Endothelial cell of umbilical vein (primary cell): ENCODE measurements at regions of chr14 and their contacts with region 1.

Region 1: DNA sequence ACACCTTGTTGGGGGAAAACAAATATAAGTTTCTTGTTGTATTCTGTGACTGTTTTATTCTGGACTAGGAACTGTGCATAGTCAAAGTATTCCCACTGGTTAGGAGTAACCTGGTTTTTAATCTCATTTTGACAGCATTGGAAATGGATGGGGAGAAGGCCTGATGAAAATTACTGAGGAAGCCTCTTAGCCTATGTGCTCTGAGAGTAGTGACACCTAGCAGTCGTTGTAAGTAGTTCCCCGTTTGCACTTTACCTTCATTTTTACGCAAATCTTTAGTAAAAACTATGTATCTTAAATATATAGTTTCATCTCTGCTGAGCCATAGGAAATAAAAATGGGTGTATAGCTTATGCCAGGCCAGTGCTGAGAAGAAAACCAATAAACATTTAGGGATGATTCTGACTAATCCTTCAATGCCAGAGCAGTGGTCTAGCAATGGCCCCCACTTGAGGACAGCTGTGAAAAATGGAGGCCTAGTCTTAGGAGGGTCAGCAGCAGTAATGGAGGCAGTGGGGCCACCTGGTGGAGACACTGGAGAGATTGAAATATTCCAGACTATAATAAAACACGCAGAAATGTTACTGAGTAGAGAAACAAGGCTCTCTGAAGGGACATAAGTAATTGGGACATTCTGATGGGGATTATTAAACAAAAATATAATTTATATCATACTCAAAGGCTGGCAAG is 133.2 kb upstream of the NOVA1 start:
- DNase-seq: peak; percentile 39
- H3K4me3 ChIP-seq: no peak overlapping the region
- H3K27ac ChIP-seq: no peak overlapping the region
- H3K4me1 ChIP-seq: no peaks in the 10 kb centered on the region
- H3K27me3 ChIP-seq: no peaks in the 10 kb centered on the region
- CTCF ChIP-seq: peak; percentile 58 to 62
- POLR2A ChIP-seq: no peak

Region 2: GRCh38 chr14:25833341-25834126 is 897.5 kb before region 1 on chr14:
- CTCF ChIA-PET with region 1: interaction called, 5 read pairs
- POLR2A ChIA-PET with region 1: no interaction called
- dilution Hi-C with region 1: no loop called
- intact Hi-C with region 1: loop called (anchors 5 kb)
- DNase-seq: peak; percentile 46
- H3K4me3 ChIP-seq: no peak overlapping the region
- H3K27ac ChIP-seq: no peak overlapping the region
- H3K4me1 ChIP-seq: no peaks in the 10 kb centered on the region
- H3K27me3 ChIP-seq: no peaks in the 10 kb centered on the region
- CTCF ChIP-seq: peak; percentile 52 to 55
- POLR2A ChIP-seq: no peak

Region 3: GRCh38 chr14:26255213-26255612 is 475.9 kb before region 1 on chr14:
- CTCF ChIA-PET with region 1: interaction called, 9 read pairs
- POLR2A ChIA-PET with region 1: no interaction called
- dilution Hi-C with region 1: no loop called
- intact Hi-C with region 1: loop called (anchors 2 kb)
- DNase-seq: peak; percentile 8
- H3K4me3 ChIP-seq: no peak overlapping the region
- H3K27ac ChIP-seq: no peak overlapping the region
- H3K4me1 ChIP-seq: no peaks in the 10 kb centered on the region
- H3K27me3 ChIP-seq: no peaks in the 10 kb centered on the region
- CTCF ChIP-seq: peak in 1 of 2 donors; percentile 3
- POLR2A ChIP-seq: no peak

Region 4: GRCh38 chr14:26598081-26598795 is 132.8 kb before region 1 on chr14:
- CTCF ChIA-PET with region 1: interaction called, 3 read pairs
- POLR2A ChIA-PET with region 1: no interaction called
- dilution Hi-C with region 1: no loop called
- intact Hi-C with region 1: loop called (anchors 1 kb)
- DNase-seq: peak; percentile 92
- H3K4me3 ChIP-seq: peak overlapping the region; percentile 55 to 98 (median 98)
- H3K27ac ChIP-seq: no peak overlapping the region
- H3K4me1 ChIP-seq: peaks cover 5% of the 10 kb centered on the region
- H3K27me3 ChIP-seq: peaks cover 8 to 18% of the 10 kb centered on the region in 2 experiments
- CTCF ChIP-seq: no peak
- POLR2A ChIP-seq: no peak

Region 5: DNA sequence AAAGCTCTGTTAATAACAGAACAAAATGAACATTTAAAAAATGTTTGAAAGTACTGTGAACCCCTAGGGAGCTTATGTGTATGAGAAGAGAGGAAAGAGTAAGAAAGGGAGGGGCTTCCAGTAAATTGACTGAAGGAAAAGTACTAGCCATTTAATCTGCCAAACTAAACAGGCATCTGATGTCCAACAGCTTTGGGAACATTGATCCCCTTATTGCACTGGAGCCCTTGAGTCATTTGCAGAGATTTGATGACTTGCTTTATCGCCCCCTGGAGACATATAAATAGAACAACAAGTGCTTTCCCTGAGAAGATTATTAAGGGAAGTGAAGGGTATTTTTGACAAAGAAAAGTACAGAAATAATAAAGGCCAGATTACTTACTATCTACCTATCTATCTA is 186.0 kb after region 1 on chr14:
- CTCF ChIA-PET with region 1: interaction called, 4 read pairs
- POLR2A ChIA-PET with region 1: no interaction called
- dilution Hi-C with region 1: no loop called
- intact Hi-C with region 1: loop called (anchors 2 kb)
- DNase-seq: peak; percentile 28
- H3K4me3 ChIP-seq: no peak overlapping the region
- H3K27ac ChIP-seq: no peak overlapping the region
- H3K4me1 ChIP-seq: no peaks in the 10 kb centered on the region
- H3K27me3 ChIP-seq: peaks cover 0 to 1% of the 10 kb centered on the region in 2 experiments
- CTCF ChIP-seq: peak; percentile 30 to 48
- POLR2A ChIP-seq: no peak

Region 6: GRCh38 chr14:27528328-27528727 is 797.3 kb after region 1 on chr14:
- CTCF ChIA-PET with region 1: no interaction called
- POLR2A ChIA-PET with region 1: no interaction called
- dilution Hi-C with region 1: no loop called
- intact Hi-C with region 1: loop called (anchors 5 kb)
- DNase-seq: peak; percentile 50
- H3K4me3 ChIP-seq: no peak overlapping the region
- H3K27ac ChIP-seq: no peak overlapping the region
- H3K4me1 ChIP-seq: no peaks in the 10 kb centered on the region
- H3K27me3 ChIP-seq: no peaks in the 10 kb centered on the region
- CTCF ChIP-seq: peak; percentile 32 to 51
- POLR2A ChIP-seq: no peak